Activated CD8-positive, alpha-beta T cell treated with anti-CD3 and anti-CD28 coated beads for 36 hours (primary cell): ENCODE measurements at regions of chr1 and their contacts with region 1.

Region 1: DNA sequence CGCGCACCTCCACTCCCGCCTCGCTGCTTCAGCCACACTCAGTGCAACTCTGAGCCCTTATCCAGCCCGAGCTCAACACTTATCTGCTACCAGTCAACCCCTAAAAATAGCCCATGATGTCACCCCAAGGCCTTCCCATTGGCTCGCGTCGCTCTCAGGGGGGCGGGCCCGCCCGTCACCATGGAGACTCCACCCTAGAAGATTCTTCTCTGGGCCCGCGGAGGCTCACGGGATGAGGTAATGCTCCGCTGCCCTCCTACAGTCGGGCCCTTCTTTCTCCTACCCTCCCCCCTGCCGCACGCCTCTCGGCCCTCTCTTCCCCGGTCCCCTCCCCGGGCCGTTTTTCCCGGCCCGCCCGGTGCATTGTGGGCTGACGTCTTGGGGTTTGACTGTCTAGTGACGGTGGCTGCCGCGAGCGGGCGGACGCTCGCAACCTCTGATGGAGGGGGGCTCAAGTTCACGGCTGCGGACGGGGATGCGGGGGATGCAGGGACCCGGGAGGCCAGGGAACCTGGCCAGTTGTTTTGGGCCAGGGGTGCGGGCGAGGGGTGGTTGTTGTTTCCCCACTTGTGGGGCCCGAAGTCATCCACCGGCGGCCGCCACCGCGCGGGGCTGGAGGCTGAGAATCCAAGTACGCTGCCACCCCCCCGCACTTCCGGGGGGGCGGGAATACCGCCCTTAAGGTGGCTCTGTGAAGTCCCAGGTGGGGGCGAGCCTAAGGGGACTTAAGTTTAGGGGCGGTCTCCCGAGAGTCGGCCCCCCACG is at the start of gene JUN:
- DNase-seq: peak; percentile 99
- ATAC-seq: peak; percentile 88
- H3K4me3 Mint-ChIP-seq: peak within 1 kb of the TSS; percentile 86
- H3K27ac Mint-ChIP-seq: peak within 1 kb of the TSS; percentile 97
- H3K4me1 Mint-ChIP-seq: peaks cover 14% of the 10 kb centered on the region
- H3K27me3 Mint-ChIP-seq: no peaks in the 10 kb centered on the region
- CTCF ChIP-seq: no peak
- total RNA-seq, gene JUN: 51.4 to 53.2 TPM

Region 2: DNA sequence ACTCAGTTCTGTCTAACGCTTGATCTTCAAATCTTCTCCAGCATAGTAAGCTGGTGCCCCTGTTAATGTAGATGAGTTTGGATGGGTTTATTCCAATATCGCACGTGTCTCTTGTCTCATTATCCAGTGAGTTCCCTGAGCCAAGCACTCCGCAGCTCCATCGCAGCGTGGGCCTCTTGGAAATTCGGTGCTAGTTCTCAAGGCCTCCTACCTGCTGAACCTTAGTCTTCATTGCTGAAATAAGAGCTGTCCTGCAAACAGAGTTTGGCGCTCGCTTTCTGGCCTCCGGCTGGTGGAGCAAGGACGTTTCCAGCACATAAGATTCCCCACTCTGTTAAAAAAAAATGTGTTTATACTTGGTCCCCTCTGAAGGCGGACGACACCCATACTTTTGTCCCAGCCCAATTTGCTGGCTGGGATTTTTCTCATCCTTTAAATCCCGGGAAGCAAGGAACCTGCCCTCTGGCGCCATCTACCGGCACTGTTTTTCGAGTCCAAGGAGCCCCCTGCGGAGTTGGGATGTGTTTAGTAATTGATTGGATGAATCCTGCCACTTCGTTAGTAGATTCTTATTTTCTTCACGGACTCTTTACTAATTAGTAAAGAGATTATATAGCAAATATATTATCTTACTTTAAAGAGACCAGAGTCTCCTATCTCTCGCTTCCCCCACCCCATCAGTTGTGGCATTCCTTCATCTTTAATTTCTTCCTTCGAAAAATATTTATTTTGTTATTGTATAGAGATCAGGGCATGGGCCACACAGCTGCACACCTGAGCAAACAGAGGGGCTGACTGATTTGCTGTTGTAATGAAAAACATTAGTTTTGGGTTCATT is 15.0 kb before region 1 on chr1:
- CTCF ChIA-PET with region 1: interaction called, 18 read pairs
- POLR2A ChIA-PET with region 1: interaction called, 12 read pairs
- intact Hi-C with region 1: no loop called
- DNase-seq: peak; percentile 65
- ATAC-seq: no peak
- H3K4me3 Mint-ChIP-seq: no peak overlapping the region
- H3K27ac Mint-ChIP-seq: no peak overlapping the region
- H3K4me1 Mint-ChIP-seq: peaks cover 7% of the 10 kb centered on the region
- H3K27me3 Mint-ChIP-seq: no peaks in the 10 kb centered on the region
- CTCF ChIP-seq: peak; percentile 96

Region 3: DNA sequence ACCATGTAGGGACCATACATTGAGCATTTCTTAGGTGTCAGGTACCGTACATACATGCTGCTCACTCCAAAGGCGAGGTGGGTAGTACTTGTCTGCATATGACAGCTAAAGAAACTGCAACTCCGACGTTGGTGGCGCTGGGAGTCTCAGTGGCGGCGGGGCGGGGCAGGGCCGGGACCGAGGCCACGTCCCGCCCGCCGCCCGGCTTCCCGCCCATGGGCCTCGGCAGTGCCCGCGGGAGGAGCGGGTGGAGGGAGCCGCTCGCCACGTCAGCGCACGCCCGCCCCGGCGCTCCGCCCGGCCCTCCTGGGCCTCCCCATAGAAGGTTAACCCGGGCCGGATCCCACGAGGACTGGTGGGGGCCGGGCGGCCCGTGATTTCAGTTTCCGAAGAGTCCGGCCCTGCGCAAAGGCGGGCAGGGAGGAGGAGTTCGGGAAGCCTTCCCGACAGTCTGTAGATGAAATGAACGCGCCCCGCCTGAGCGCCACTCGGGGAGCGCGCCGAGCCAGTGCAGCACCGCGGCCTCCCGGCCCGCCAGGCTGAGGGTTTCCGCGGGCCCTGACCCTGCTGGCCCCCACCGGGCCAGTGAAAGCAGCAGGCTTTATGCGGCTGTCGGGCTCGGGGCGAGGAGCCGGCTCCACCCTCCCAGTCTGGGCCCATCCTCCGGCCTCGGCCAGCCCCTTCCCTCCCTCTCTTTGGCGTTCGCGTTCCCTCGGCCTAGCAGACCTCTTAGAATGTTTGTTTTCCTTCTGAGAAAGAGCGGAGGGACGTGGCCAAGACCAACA is 119.5 kb after region 1 on chr1:
- CTCF ChIA-PET with region 1: interaction called, 3 read pairs
- POLR2A ChIA-PET with region 1: interaction called, 11 read pairs
- intact Hi-C with region 1: no loop called
- DNase-seq: peak; percentile 89
- ATAC-seq: peak; percentile 91
- H3K4me3 Mint-ChIP-seq: peak overlapping the region; percentile 67
- H3K27ac Mint-ChIP-seq: peak overlapping the region; percentile 77
- H3K4me1 Mint-ChIP-seq: peaks cover 11% of the 10 kb centered on the region
- H3K27me3 Mint-ChIP-seq: no peaks in the 10 kb centered on the region
- CTCF ChIP-seq: no peak

Region 4: GRCh38 chr1:59046730-59047157 is 262.6 kb after region 1 on chr1:
- CTCF ChIA-PET with region 1: no interaction called
- POLR2A ChIA-PET with region 1: no interaction called
- intact Hi-C with region 1: loop called (anchors 10 kb)
- DNase-seq: peak; percentile 70
- ATAC-seq: peak; percentile 92
- H3K4me3 Mint-ChIP-seq: no peak overlapping the region
- H3K27ac Mint-ChIP-seq: peak overlapping the region; percentile 76
- H3K4me1 Mint-ChIP-seq: peaks cover 34% of the 10 kb centered on the region
- H3K27me3 Mint-ChIP-seq: no peaks in the 10 kb centered on the region
- CTCF ChIP-seq: peak; percentile 39

Region 5: DNA sequence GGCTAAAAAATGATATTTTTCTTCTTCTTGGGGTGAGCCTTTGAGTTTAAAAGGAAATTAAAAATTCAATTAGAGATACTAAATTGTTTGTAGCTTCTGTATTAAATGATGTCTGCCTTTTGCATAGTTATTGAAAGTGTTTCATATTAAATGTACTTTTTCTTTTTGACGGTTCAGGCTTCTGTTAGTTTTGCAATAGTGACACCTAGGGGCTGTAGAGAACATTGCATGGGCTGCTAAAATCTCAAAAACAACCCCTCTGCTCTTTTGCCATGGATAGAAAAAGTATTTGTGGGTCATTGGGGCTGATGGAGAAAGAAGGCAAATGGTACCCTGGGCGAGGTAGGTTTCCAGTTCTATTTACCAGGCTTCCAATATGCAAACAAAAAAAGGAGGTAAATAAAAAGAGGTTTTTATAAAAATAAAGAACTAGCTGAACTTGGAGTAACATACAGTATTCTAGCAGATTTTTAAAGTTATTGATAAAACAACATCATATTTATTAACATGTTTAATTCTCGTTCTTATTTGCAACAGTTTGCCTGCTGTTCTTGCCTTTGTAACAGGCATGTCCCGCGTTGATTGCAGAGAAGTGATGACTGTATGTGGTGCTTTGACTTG is 915.2 kb after region 1 on chr1:
- CTCF ChIA-PET with region 1: interaction called, 4 read pairs
- POLR2A ChIA-PET with region 1: no interaction called
- intact Hi-C with region 1: loop called (anchors 2 kb)
- DNase-seq: peak; percentile 19
- ATAC-seq: peak; percentile 69
- H3K4me3 Mint-ChIP-seq: no peak overlapping the region
- H3K27ac Mint-ChIP-seq: no peak overlapping the region
- H3K4me1 Mint-ChIP-seq: peaks cover 23% of the 10 kb centered on the region
- H3K27me3 Mint-ChIP-seq: no peaks in the 10 kb centered on the region
- CTCF ChIP-seq: peak; percentile 94